PC-3 (cell line): ENCODE measurements at regions of chr15 and their contacts with region 1.

Region 1: GRCh38 chr15:38252481-38253412 is at the start of gene SPRED1:
- DNase-seq: peak; percentile 53
- ATAC-seq: peak; percentile 37
- H3K4me3 ChIP-seq: peak within 1 kb of the TSS; percentile 90
- H3K27ac ChIP-seq: peak within 1 kb of the TSS; percentile 94
- H3K4me1 ChIP-seq: peaks cover 36% of the 10 kb centered on the region
- H3K27me3 ChIP-seq: no peaks in the 10 kb centered on the region
- CTCF ChIP-seq: no peak
- total RNA-seq, gene SPRED1: 39.7 and 42.3 TPM in 2 replicates

Region 2: DNA sequence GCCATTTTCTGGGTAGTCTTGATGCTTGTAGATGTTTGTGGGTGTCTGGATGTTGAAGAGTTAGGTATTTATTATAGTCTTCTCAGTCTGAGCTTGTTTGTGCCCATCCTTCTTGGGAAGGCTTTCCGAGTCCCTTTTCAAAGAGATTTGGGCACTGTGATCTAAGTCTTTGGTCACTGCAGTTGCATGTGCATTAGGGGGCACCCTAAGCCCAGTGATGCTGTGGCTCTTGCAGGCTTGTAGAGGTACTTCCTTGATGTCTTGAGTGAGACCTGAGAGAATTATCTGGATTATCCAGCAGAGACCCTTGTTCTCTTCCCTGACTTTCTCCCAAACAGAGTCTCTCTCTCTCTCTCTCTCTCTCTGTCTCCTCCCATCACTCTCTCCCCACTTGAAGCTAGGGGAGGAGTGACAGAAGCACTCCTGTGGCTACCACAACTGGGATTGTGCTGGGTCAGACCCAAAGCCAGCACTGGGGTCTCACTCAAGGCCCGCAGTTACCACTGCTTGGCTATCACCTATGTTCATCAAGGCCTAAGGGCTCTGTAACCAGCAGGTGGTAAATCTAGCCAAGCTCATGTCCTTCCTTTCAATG is 249.8 kb before region 1 on chr15:
- CTCF ChIA-PET with region 1: no interaction called
- POLR2A ChIA-PET with region 1: no interaction called
- intact Hi-C with region 1: loop called (anchors 2 kb)
- DNase-seq: peak; percentile 80
- ATAC-seq: peak; percentile 95
- H3K4me3 ChIP-seq: no peak overlapping the region
- H3K27ac ChIP-seq: no peak overlapping the region
- H3K4me1 ChIP-seq: 0 out of 2 replicates have a peak, but pooled peaks cover 4% of the 10 kb centered on the region
- H3K27me3 ChIP-seq: no peaks in the 10 kb centered on the region
- CTCF ChIP-seq: peak; percentile 91

Region 3: GRCh38 chr15:38115121-38115520 is 137.6 kb before region 1 on chr15:
- CTCF ChIA-PET with region 1: no interaction called
- POLR2A ChIA-PET with region 1: no interaction called
- intact Hi-C with region 1: no loop called
- DNase-seq: no peak
- ATAC-seq: no peak
- H3K4me3 ChIP-seq: no peak overlapping the region
- H3K27ac ChIP-seq: no peak overlapping the region
- H3K4me1 ChIP-seq: peaks cover 5% of the 10 kb centered on the region; the same call in 1 of the 2 replicates
- H3K27me3 ChIP-seq: no peaks in the 10 kb centered on the region
- CTCF ChIP-seq: no peak

Region 4: GRCh38 chr15:38129531-38130204 is 123.1 kb before region 1 on chr15:
- CTCF ChIA-PET with region 1: no interaction called
- POLR2A ChIA-PET with region 1: interaction called, 3 read pairs
- intact Hi-C with region 1: loop called (anchors 1 kb)
- DNase-seq: peak; percentile 99
- ATAC-seq: peak; percentile 86
- H3K4me3 ChIP-seq: peak overlapping the region; percentile 63
- H3K27ac ChIP-seq: peak overlapping the region; percentile 96
- H3K4me1 ChIP-seq: peaks cover 47% of the 10 kb centered on the region
- H3K27me3 ChIP-seq: no peaks in the 10 kb centered on the region
- CTCF ChIP-seq: no peak

Region 5: GRCh38 chr15:38217191-38217595 is 35.6 kb before region 1 on chr15:
- CTCF ChIA-PET with region 1: no interaction called
- POLR2A ChIA-PET with region 1: interaction called, 8 read pairs
- intact Hi-C with region 1: loop called (anchors 1 kb)
- DNase-seq: peak; percentile 82
- ATAC-seq: peak; percentile 77
- H3K4me3 ChIP-seq: peak overlapping the region; percentile 43; the same call in 1 of the 2 replicates
- H3K27ac ChIP-seq: peak overlapping the region; percentile 95
- H3K4me1 ChIP-seq: peaks cover 47% of the 10 kb centered on the region
- H3K27me3 ChIP-seq: no peaks in the 10 kb centered on the region
- CTCF ChIP-seq: no peak

Region 6: DNA sequence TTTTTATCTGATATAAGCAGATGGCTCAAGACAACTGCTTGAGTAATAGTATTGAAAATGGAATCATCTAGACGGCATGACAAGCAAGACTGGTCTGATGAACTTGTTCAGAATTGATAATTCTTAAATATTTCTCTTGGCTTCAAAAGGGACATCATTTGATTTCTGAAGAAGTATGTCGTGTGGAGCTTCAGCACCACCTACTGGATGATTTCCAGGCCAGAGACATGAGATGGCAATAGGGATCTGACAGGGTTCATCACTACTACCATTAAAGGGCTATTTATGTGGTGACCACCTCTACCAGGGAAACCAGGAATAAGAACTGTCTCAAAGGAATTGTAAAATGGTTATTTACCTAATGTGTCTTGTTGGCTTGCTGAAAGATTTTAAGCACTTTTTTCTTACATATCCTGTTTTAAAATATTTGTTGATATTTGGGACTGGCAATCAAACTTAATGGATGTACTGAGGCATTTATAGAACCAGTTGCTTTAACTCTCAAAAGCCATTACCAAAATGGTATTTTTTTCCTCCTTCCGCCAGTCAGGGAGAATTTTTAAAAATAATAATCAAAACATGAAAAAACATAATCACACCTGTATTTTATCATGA is 101.7 kb after region 1 on chr15:
- CTCF ChIA-PET with region 1: interaction called, 5 read pairs
- POLR2A ChIA-PET with region 1: interaction called, 3 read pairs
- intact Hi-C with region 1: loop called (anchors 1 kb)
- DNase-seq: peak; percentile 87
- ATAC-seq: peak; percentile 85
- H3K4me3 ChIP-seq: no peak overlapping the region
- H3K27ac ChIP-seq: no peak overlapping the region
- H3K4me1 ChIP-seq: no peaks in the 10 kb centered on the region
- H3K27me3 ChIP-seq: no peaks in the 10 kb centered on the region
- CTCF ChIP-seq: peak; percentile 91